CD4-positive, alpha-beta T cell (primary cell): ENCODE measurements at regions of chr4 and their contacts with region 1.

Region 1: GRCh38 chr4:82138374-82138773 is 235.4 kb downstream of the HNRNPD start:
- DNase-seq: no peak
- ATAC-seq: no peak
- H3K4me3 ChIP-seq: no peak overlapping the region
- H3K4me3 Mint-ChIP-seq: no peak overlapping the region
- H3K27ac ChIP-seq: no peak overlapping the region
- H3K27ac Mint-ChIP-seq: peak overlapping the region; percentile 27
- H3K4me1 ChIP-seq: peaks cover 9% of the 10 kb centered on the region
- H3K4me1 Mint-ChIP-seq: peaks cover 46% of the 10 kb centered on the region
- H3K27me3 ChIP-seq: no peaks in the 10 kb centered on the region
- H3K27me3 Mint-ChIP-seq: no peaks in the 10 kb centered on the region
- CTCF ChIP-seq: no peak

Region 2: GRCh38 chr4:82217986-82218715 is 79.8 kb after region 1 on chr4:
- CTCF ChIA-PET with region 1: no interaction called
- POLR2A ChIA-PET with region 1: interaction called, 8 read pairs
- intact Hi-C with region 1: loop called in 1 of 2 experiments (anchors 5 kb)
- DNase-seq: peak in 4 of 14 experiments; percentile 24 to 42 (median 38)
- ATAC-seq: no peak
- H3K4me3 ChIP-seq: no peak overlapping the region
- H3K4me3 Mint-ChIP-seq: no peak overlapping the region
- H3K27ac ChIP-seq: no peak overlapping the region
- H3K27ac Mint-ChIP-seq: no peak overlapping the region
- H3K4me1 ChIP-seq: peaks cover 6% of the 10 kb centered on the region
- H3K4me1 Mint-ChIP-seq: peaks cover 36% of the 10 kb centered on the region
- H3K27me3 ChIP-seq: no peaks in the 10 kb centered on the region
- H3K27me3 Mint-ChIP-seq: no peaks in the 10 kb centered on the region
- CTCF ChIP-seq: peak; percentile 53